Ascending aorta (tissue), 2 donors: ENCODE measurements at regions of chr12 and their contacts with region 1.

Region 1: DNA sequence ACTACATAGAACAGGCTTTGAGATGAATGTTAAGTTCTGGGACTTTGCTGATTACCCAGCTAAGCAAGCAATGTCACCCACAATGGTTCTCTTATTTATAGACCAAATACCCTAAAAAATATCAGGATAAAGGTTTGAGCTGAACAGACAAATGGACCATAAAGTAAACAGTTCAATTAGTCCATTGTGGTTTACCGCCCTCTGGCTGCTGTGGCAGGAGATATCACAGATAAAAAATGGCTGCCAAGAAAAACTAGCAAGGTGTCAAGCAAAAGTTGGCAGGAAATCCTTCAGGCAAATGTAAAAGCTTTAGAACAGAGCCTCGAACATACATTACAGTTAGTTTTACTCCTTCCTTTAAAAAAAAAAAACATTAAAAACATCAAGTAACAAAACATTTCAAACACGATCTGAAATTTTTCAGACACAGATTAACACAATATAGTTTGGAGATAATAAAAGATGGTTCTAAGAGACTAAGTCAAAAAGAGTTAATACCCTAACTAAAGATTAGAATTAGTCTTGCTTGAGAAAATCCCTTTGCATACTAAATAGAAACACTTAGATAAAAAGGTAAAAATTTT is 41.3 kb downstream of the MED13L start:
- DNase-seq: no peak
- H3K4me3 ChIP-seq: no peak overlapping the region
- H3K27ac ChIP-seq: no peak overlapping the region
- H3K4me1 ChIP-seq: peaks cover 6 to 28% of the 10 kb centered on the region in 2 donors
- H3K27me3 ChIP-seq: no peaks in the 10 kb centered on the region
- CTCF ChIP-seq: peak; percentile 49 to 68 (median 63)

Region 2: DNA sequence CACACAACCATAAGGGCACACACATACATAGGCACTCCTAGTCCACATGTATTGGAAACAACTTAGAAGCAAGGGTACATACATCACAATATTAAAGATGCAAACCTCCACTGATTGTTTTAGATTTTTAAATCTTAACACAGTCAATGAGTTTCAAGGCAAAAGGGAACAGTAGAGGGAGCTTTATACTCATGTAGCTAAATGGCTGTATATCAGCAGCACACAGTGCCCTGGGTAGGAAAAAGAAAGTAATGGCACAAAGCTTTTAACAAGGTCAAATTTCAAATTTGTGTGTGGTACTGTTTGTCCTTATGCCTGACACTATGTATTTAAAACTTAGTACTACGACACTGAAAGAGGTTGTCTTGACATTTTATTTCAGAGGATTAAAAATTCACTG is 220.7 kb before region 1 on chr12:
- intact Hi-C with region 1: loop called (anchors 10 kb)
- DNase-seq: no peak
- H3K4me3 ChIP-seq: no peak overlapping the region
- H3K27ac ChIP-seq: no peak overlapping the region
- H3K4me1 ChIP-seq: peaks cover 0 to 3% of the 10 kb centered on the region in 2 donors
- H3K27me3 ChIP-seq: no peaks in the 10 kb centered on the region
- CTCF ChIP-seq: peak; percentile 42 to 65 (median 45)

Region 3: GRCh38 chr12:116066381-116067230 is 169.6 kb before region 1 on chr12:
- intact Hi-C with region 1: loop called (anchors 5 kb)
- DNase-seq: no peak
- H3K4me3 ChIP-seq: no peak overlapping the region
- H3K27ac ChIP-seq: no peak overlapping the region
- H3K4me1 ChIP-seq: peaks cover 0 to 15% of the 10 kb centered on the region in 2 donors
- H3K27me3 ChIP-seq: no peaks in the 10 kb centered on the region
- CTCF ChIP-seq: peak; percentile 17 to 73 (median 67)

Region 4: DNA sequence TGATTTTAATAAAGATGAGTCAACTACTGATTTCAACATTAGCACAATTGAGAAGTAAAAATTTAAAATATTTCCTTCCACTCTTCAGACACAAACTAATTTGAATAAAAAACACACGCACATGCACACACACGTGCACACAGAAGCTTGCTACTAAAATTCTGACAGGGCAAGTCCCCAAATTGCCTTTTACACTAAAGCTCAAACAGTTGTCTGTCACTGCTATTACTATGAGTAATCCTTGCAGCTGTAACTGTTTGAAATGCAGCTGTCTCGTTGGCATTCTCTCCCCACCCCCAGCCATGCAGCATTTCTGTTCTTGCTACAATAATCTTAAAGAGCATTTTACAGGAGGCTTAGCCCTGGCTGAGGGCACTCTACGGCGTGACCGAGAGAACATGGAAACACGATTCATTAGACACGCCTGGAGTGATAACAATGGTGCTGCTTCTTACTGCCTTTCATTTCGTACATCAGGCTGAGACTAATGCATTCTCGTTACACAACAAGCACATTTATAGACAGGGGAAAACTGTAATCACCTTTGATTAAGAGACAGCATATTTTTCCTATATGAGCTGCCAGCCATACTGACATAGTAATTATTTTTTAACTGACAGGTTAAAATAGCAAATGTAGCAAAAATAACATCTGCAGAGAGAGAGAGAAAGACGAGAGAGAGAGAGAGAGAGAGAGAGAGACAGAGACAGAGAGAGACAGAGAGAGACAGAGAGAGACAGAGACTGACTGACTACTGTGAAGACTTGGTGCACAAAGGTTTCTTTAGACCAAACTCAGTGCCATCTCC is 112.6 kb before region 1 on chr12:
- intact Hi-C with region 1: no loop called
- DNase-seq: no peak
- H3K4me3 ChIP-seq: peak overlapping the region in 1 of 2 donors; percentile 12
- H3K27ac ChIP-seq: no peak overlapping the region
- H3K4me1 ChIP-seq: peaks cover 10 to 71% of the 10 kb centered on the region in 2 donors
- H3K27me3 ChIP-seq: no peaks in the 10 kb centered on the region
- CTCF ChIP-seq: no peak

Region 5: DNA sequence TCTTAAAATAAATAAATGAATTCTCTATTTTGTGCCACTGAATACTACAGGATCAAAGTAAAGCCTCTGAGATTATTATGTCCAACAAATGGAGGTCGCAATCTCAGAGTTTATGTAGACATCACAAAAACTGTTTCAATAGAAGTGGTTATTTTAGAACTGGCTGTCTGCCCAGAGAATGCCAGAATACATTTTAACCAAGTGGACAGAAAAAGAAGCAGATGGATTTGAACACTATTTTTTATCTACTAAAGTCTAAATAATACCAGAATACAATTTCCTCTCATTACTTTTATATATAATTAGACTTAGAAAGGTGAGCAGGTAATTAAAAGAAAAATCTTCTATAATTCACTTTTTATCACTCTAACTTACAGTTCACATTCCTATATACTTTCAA is 77.1 kb before region 1 on chr12:
- intact Hi-C with region 1: loop called (anchors 5 kb)
- DNase-seq: no peak
- H3K4me3 ChIP-seq: no peak overlapping the region
- H3K27ac ChIP-seq: no peak overlapping the region
- H3K4me1 ChIP-seq: peaks cover 0 to 19% of the 10 kb centered on the region in 2 donors
- H3K27me3 ChIP-seq: no peaks in the 10 kb centered on the region
- CTCF ChIP-seq: no peak

Region 6: DNA sequence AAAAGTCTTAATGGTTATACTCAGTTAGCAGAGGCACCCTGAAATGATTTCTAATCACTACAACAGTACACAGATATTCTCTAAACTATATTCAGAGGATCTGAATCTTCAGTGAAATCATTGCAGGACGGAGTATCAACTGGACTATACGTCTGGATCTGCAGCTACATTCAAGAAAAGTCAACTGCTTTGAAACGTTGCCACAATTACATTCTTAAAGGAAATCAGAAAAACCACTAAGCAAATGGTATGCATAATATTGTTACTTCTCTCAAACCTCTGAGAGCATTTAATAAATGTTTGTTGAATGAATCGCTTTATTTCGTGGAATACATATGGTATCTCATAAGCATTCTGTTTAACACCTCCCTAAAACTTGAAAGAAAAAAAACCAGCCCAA is 26.1 kb before region 1 on chr12:
- intact Hi-C with region 1: no loop called
- DNase-seq: no peak
- H3K4me3 ChIP-seq: no peak overlapping the region
- H3K27ac ChIP-seq: no peak overlapping the region
- H3K4me1 ChIP-seq: peaks cover 0 to 24% of the 10 kb centered on the region in 2 donors
- H3K27me3 ChIP-seq: no peaks in the 10 kb centered on the region
- CTCF ChIP-seq: no peak